H1 (cell line): ENCODE measurements at regions of chr15 and their contacts with region 1.

Region 1: DNA sequence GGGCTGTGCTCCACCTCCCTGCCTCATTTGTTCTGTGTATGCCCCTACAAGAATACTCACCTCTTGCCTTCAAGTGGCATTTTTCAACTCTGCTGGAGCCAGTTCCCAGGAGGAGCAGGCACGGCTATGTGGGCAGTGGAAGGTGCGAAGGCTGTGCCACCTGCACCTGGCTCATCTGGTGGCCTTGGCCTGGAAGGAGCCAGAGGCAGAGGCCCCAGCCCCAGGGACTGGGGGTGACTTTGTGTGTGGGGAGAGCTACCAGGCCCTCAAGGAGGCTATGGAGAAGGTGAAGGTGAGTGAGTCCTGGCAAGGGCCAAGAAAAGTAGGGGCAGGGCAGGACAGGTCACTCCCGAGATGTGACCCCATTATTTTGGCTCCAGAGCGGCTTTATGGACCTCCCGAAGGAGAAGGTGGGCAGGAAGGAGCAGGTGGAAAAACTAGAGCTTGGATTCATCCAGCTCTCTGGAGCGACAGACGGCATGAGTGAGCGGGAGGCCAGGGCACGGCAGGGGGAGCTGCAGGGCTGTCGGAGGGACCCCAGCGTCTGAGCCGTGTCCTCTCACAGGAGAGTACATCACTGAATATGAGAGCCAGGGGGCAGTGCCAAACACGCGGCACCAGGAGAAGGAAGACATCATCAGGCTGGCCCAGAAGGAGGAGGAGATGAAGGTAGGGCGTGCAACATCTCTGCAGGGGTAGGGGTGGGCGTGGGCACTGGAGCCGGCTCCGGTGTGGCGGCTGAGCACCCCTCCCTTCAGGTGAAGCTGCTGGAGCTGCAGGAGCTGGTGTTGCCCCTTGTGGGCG is 57.3 kb upstream of the UBE2Q2 start:
- DNase-seq: peak; percentile 59 to 68
- H3K4me3 ChIP-seq: peak overlapping the region in 1 of 4 experiments; percentile 27; a peak in 1 of 8 replicates
- H3K27ac ChIP-seq: no peak overlapping the region
- H3K4me1 ChIP-seq: peaks cover 0 to 2% (median 0%) of the 10 kb centered on the region in 4 experiments; a peak in 1 of 7 replicates
- H3K27me3 ChIP-seq: no peaks in the 10 kb centered on the region
- CTCF ChIP-seq: peak; percentile 46 to 61 (median 50)
- EP300 ChIP-seq: no peak
- POLR2A ChIP-seq: no peak
- RAD21 ChIP-seq: peak; percentile 48 to 67

Region 2: GRCh38 chr15:75705853-75706681 is 79.9 kb before region 1 on chr15:
- CTCF ChIA-PET with region 1: no interaction called
- POLR2A ChIA-PET with region 1: no interaction called
- DNase-seq: no peak
- H3K4me3 ChIP-seq: no peak overlapping the region
- H3K27ac ChIP-seq: no peak overlapping the region; the same call in 1 of the 2 replicates
- H3K4me1 ChIP-seq: peaks cover 0 to 6% (median 1%) of the 10 kb centered on the region in 4 experiments; a peak in 3 of 7 replicates
- H3K27me3 ChIP-seq: no peaks in the 10 kb centered on the region
- CTCF ChIP-seq: no peak
- EP300 ChIP-seq: no peak; a peak in 1 of 3 replicates
- POLR2A ChIP-seq: no peak
- RAD21 ChIP-seq: no peak

Region 3: GRCh38 chr15:75723847-75724660 is 61.9 kb before region 1 on chr15:
- CTCF ChIA-PET with region 1: interaction called, 15 read pairs
- POLR2A ChIA-PET with region 1: no interaction called
- DNase-seq: no peak
- H3K4me3 ChIP-seq: no peak overlapping the region
- H3K27ac ChIP-seq: no peak overlapping the region
- H3K4me1 ChIP-seq: no peaks in the 10 kb centered on the region; a peak in 1 of 7 replicates
- H3K27me3 ChIP-seq: no peaks in the 10 kb centered on the region; a peak in 3 of 7 replicates
- CTCF ChIP-seq: no peak
- EP300 ChIP-seq: no peak
- POLR2A ChIP-seq: no peak
- RAD21 ChIP-seq: no peak

Region 4: DNA sequence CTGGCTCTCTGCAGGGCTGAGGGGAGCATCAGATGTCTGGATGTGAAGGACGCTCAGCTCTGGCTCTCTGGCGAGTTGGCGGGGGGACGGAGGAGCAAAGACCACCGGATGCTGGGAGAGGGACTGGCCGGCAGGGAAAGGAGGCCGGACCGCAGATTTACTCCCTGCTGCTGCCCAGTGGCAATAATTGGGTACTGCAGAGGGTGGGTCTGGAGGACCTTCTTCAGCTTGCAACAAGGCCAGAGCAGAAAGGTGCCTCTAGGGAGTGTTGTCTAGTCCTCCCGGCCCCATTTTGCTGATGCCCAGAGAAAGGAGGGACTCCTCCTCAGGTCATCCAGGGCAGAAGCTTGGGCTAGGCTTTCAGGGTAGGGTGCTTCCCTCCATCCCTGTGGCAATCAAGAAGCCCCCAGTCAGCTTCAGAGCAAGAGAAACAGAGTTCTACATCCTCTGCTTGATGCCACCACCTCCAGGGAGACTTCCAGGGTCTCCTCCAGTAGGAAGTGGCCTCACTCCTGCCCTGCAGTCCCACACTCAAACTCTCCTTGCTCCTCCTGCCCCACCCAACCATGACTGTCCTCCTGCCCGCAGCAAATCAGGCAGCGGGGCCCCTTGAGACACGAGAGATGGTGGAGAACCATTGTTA is 53.0 kb before region 1 on chr15:
- CTCF ChIA-PET with region 1: interaction called, 15 read pairs
- POLR2A ChIA-PET with region 1: no interaction called
- DNase-seq: peak; percentile 51 to 96
- H3K4me3 ChIP-seq: no peak overlapping the region
- H3K27ac ChIP-seq: no peak overlapping the region
- H3K4me1 ChIP-seq: peaks cover 2 to 7% (median 4%) of the 10 kb centered on the region in 4 experiments; a peak in 6 of 7 replicates
- H3K27me3 ChIP-seq: no peaks in the 10 kb centered on the region
- CTCF ChIP-seq: peak; percentile 81 to 91 (median 89)
- EP300 ChIP-seq: no peak
- POLR2A ChIP-seq: no peak
- RAD21 ChIP-seq: peak; percentile 54 to 69

Region 5: GRCh38 chr15:75921729-75922703 is 136.0 kb after region 1 on chr15:
- CTCF ChIA-PET with region 1: interaction called, 14 read pairs
- POLR2A ChIA-PET with region 1: interaction called, 4 read pairs
- DNase-seq: no peak
- H3K4me3 ChIP-seq: no peak overlapping the region
- H3K27ac ChIP-seq: no peak overlapping the region
- H3K4me1 ChIP-seq: peaks cover 0 to 8% (median 1%) of the 10 kb centered on the region in 4 experiments; a peak in 1 of 7 replicates
- H3K27me3 ChIP-seq: no peaks in the 10 kb centered on the region
- CTCF ChIP-seq: peak in 2 of 3 experiments; percentile 56 to 60; a peak in 3 of 4 replicates
- EP300 ChIP-seq: no peak
- POLR2A ChIP-seq: no peak
- RAD21 ChIP-seq: peak; percentile 80 to 84